ENCODE measurements at regions of chr10 and their contacts with region 1.

Region 1: DNA sequence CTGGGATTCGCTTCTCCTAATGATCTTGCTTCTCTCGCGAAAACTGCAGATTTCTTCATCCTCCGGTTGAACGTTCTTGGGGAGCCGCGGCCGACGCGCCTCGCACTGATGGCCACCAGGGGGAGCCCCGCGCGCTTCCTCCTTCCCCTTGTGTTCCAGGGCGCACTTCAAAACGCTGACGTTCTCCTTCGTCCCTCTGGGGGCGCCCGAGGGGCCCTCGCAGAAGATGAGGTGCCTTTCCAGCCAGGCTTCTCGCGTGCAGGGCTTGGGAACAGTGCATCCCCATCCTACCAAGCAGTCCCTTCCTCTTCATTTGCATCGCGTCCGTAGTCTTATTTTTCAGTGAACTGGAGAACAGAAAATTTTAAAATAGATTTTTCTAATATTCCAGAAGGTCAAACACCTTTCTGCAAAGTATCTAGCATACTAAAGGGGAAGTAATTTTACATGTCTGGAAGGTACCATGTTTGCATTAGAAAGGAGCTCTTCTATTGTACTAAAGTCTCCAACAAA is 22.5 kb downstream of the GSTO2 start:
- DNase-seq: peak; percentile 87 to 93 (median 87)
- H3K4me3 ChIP-seq: no peak overlapping the region
- H3K4me3 Mint-ChIP-seq: peak overlapping the region in 1 of 2 donors; percentile 53
- H3K27ac ChIP-seq: no peak overlapping the region
- H3K27ac Mint-ChIP-seq: peak overlapping the region in 5 of 7 donors; percentile 28 to 68 (median 55)
- H3K4me1 ChIP-seq: peaks cover 14 to 22% of the 10 kb centered on the region in 2 donors
- H3K4me1 Mint-ChIP-seq: peaks cover 30% of the 10 kb centered on the region
- H3K27me3 ChIP-seq: no peaks in the 10 kb centered on the region
- H3K27me3 Mint-ChIP-seq: peaks cover 6 to 11% (median 6%) of the 10 kb centered on the region in 3 donors
- CTCF ChIP-seq: peak; percentile 100

Region 2: DNA sequence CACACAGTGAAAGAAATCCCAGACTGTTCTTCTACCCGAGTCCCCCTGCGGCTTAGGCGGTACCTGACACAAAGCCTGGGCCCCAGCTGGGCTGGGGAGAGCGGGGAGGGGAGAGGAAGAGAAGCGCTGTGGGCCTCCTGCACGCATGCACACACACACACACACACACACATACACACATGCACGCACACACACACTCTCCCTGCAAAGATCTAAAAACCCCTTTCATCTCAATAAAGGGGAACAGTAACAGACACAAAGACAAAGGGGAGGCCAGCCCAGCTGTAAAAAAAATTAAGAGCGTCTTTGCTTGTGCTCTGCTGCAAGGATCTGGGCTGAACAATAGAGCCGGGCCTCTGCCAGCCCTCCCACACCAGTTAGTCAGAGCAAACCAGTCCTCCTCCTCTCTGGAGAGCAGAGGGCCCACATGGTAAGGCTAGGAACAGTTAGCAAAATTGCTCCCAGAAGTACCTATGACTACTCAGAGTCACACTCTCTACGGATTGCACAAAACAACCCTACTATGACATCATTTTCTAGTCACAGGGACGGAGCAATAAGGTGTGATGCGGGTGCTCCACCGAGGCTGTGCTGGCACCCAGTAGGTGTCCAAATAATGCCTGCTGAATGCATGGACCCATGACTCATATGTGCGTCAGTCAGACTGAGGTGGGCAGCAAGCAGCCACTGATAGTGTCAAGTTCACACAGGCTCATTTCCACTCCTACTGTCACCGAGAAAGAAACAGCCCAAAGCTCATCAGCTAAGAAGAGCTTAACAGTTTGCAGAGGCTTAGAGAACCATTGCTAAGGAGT is 37.6 kb after region 1 on chr10:
- intact Hi-C with region 1: loop called in 1 of 2 experiments (anchors 5 kb)
- DNase-seq: peak; percentile 90 to 98 (median 95)
- H3K4me3 ChIP-seq: peak overlapping the region in 1 of 3 experiments; percentile 65
- H3K4me3 Mint-ChIP-seq: peak overlapping the region; percentile 61 to 82
- H3K27ac ChIP-seq: peak overlapping the region; percentile 61 to 86
- H3K27ac Mint-ChIP-seq: peak overlapping the region; percentile 91 to 96 (median 94)
- H3K4me1 ChIP-seq: peaks cover 95 to 98% of the 10 kb centered on the region in 2 donors
- H3K4me1 Mint-ChIP-seq: peaks cover 95% of the 10 kb centered on the region
- H3K27me3 ChIP-seq: no peaks in the 10 kb centered on the region
- H3K27me3 Mint-ChIP-seq: peaks cover 0 to 5% (median 0%) of the 10 kb centered on the region in 3 donors
- CTCF ChIP-seq: no peak

Region 3: DNA sequence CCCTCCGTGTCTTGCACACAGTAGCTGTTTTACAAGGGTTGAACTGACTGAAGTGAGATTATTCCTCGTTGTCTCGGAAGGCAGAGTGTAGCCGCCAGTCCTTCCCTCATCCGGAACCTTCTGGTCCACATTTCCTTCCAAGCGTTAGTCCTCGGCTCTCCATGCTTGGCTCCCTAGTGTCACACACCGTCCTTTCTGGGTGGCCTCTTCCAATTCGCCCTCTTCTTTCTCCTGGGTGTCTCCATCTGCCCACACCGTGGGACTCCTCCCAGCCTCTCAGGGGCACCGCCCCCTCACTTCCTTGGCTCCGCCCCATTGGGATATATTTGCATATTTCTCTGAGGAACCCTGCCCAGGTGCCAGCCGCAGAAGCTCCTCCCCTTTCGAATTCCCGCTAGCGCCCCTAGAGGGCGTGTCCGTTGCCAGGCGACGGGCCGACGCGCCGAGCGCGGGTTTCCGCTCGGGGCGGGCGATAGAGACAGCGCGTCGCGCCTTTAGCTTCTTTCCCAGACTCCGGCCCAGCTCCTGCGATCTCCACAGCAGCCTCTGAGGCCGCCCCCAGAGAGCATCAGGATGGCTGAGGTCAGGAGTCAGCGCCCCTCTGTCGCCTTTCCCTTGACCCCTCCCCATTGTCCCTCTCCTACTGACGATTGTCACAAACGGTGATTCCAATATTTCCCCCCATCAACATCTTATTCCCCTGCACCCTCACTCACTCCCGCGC is 62.0 kb after region 1 on chr10 and contains the start of gene CFAP58:
- intact Hi-C with region 1: loop called in 1 of 2 experiments (anchors 5 kb)
- DNase-seq: peak; percentile 81 to 88 (median 83)
- H3K4me3 ChIP-seq: peak within 1 kb of the TSS; percentile 18 to 72 (median 36)
- H3K4me3 Mint-ChIP-seq: no peak within 1 kb of the TSS
- H3K27ac ChIP-seq: peak within 1 kb of the TSS; percentile 31 to 52
- H3K27ac Mint-ChIP-seq: no peak within 1 kb of the TSS
- H3K4me1 ChIP-seq: peaks cover 68 to 72% of the 10 kb centered on the region in 2 donors
- H3K4me1 Mint-ChIP-seq: no peaks in the 10 kb centered on the region
- H3K27me3 ChIP-seq: no peaks in the 10 kb centered on the region
- H3K27me3 Mint-ChIP-seq: peaks cover 0 to 1% (median 0%) of the 10 kb centered on the region in 3 donors
- CTCF ChIP-seq: peak; percentile 83
- polyA plus RNA-seq, gene CFAP58: 0.16 TPM in 1 of 3 donors, not detected in the others

Region 4: DNA sequence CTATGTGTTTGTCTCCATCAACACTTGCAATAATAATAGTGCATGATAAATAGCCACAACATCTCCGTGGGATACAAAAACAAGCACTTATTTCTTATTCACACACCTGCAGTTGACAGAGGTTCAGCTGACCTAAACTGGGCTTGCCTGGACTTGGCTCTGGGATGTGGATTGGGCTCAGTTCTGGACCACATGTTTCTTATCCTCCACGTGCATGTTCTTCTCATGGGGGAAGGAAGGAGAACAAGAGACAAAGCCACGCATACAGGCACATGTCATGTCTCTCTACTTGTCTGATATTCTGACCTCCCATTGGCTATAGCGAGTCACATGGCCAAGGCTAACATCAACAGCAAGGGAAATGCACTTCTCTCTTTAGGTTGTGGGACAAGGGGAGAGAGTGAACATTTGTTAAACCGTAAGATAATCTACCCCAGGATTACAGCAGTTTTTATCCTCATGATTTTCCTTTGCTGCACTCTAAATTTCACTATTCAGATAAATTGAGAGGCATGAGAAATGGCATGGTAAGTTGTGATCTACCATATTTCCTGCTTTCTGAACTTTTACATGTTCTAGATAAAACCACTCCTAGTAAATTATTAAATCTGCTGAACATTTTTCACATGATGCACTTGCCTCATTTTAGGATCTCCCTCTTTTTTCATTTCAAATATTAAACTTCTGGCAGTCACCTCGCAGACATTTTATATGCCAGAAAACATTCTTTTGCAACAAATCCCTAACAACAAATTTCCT is 95.8 kb after region 1 on chr10:
- intact Hi-C with region 1: no loop called
- DNase-seq: peak; percentile 12 to 40 (median 15)
- H3K4me3 ChIP-seq: no peak overlapping the region
- H3K4me3 Mint-ChIP-seq: no peak overlapping the region
- H3K27ac ChIP-seq: no peak overlapping the region
- H3K27ac Mint-ChIP-seq: no peak overlapping the region
- H3K4me1 ChIP-seq: no peaks in the 10 kb centered on the region
- H3K4me1 Mint-ChIP-seq: peaks cover 2% of the 10 kb centered on the region
- H3K27me3 ChIP-seq: peaks cover 2 to 16% of the 10 kb centered on the region in 2 donors
- H3K27me3 Mint-ChIP-seq: peaks cover 9 to 11% (median 9%) of the 10 kb centered on the region in 3 donors
- CTCF ChIP-seq: no peak

Measured in CD14-positive monocyte (primary cell).